Common myeloid progenitor, CD34-positive (primary cell): ENCODE measurements at regions of chr19 and their contacts with region 1.

Region 1: DNA sequence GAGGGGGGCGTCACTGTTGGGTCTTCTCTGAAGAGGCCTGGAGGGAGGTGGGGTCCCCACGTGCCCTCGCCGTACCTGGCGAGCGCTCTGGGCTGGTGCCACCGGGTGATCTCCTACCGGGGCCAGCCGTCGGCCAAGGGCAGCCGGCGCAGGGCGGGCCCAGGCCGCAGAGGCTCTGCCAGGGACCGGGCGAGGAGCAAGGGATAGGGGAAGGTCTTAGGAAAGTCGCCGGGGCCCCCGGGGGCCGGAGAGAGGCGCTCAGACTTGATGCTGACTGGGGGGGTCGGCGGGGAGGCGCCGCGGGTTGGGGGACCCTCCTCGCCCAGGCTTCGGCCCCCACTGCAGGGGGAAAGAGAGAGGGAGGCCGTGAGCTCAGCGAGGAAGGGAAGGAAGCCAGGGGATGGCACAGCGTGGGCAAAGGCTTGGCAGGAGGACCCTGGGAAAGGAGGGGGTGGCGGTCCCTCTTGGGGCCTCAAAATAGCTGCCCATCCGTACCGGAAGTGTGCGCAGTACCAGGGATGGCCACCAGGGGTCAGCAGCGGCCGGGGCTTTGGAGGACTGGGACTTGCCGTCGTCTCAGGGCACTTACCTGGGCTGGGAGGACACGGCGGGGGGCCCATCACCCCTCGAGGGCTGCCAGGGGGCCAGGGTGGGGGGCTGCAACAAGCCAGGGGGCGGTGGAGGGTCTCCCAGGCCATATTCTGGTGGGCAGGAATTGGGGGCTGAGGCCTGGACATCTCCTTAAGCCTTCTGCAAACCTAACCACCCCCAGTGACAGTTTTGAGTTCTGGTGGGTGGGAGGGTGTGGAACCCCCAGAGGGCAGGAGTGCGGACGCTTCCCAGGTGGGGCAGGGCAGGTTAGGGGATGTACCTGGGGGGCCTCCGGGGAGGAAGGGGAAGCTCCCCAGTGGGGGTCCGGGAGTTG is 7.7 kb upstream of the TMEM161A start:
- DNase-seq: peak; percentile 59 to 78 (median 71)
- H3K4me3 ChIP-seq: no peak overlapping the region
- H3K27ac ChIP-seq: no peak overlapping the region
- H3K4me1 ChIP-seq: peaks cover 0 to 3% (median 0%) of the 10 kb centered on the region in 4 experiments
- H3K27me3 ChIP-seq: no peaks in the 10 kb centered on the region

Region 2: GRCh38 chr19:19021115-19021514 is 124.8 kb before region 1 on chr19:
- CTCF ChIA-PET with region 1: no interaction called
- POLR2A ChIA-PET with region 1: no interaction called
- DNase-seq: no peak
- H3K4me3 ChIP-seq: no peak overlapping the region
- H3K27ac ChIP-seq: no peak overlapping the region
- H3K4me1 ChIP-seq: no peaks in the 10 kb centered on the region
- H3K27me3 ChIP-seq: no peaks in the 10 kb centered on the region

Region 3: DNA sequence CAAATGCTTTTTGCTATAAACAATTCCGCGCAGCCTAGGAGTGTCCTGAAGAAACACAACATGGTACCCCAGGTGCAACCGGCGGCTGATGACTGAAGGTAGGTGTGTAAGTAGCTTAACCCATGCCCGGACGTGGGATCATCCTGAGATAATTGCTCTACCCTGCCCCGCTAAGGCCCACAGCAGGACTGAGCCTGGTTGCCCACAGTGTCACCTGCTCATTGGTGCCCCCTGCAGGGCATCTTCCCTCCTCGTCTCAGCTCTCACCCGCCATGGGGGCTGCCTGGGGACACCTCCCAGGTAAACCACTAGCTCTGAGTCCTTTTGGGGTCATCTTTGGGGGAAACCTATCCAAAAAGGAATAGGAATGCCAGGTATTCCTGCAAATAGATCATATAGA is 30.0 kb before region 1 on chr19:
- CTCF ChIA-PET with region 1: no interaction called
- POLR2A ChIA-PET with region 1: no interaction called
- DNase-seq: peak; percentile 16 to 50 (median 25)
- H3K4me3 ChIP-seq: no peak overlapping the region
- H3K27ac ChIP-seq: no peak overlapping the region
- H3K4me1 ChIP-seq: peaks cover 0 to 10% (median 4%) of the 10 kb centered on the region in 4 experiments
- H3K27me3 ChIP-seq: no peaks in the 10 kb centered on the region

Region 4: GRCh38 chr19:19224852-19225494 is 79.0 kb after region 1 on chr19:
- CTCF ChIA-PET with region 1: interaction called, 13 read pairs
- POLR2A ChIA-PET with region 1: no interaction called
- DNase-seq: peak; percentile 75 to 82 (median 80)
- H3K4me3 ChIP-seq: peak overlapping the region in 5 of 7 experiments; percentile 8 to 66 (median 52)
- H3K27ac ChIP-seq: no peak overlapping the region
- H3K4me1 ChIP-seq: peaks cover 0 to 11% (median 7%) of the 10 kb centered on the region in 4 experiments
- H3K27me3 ChIP-seq: peaks cover 0 to 53% (median 26%) of the 10 kb centered on the region in 5 experiments